CD14-positive monocyte (primary cell): ENCODE measurements at regions of chr17 and their contacts with region 1.

Region 1: DNA sequence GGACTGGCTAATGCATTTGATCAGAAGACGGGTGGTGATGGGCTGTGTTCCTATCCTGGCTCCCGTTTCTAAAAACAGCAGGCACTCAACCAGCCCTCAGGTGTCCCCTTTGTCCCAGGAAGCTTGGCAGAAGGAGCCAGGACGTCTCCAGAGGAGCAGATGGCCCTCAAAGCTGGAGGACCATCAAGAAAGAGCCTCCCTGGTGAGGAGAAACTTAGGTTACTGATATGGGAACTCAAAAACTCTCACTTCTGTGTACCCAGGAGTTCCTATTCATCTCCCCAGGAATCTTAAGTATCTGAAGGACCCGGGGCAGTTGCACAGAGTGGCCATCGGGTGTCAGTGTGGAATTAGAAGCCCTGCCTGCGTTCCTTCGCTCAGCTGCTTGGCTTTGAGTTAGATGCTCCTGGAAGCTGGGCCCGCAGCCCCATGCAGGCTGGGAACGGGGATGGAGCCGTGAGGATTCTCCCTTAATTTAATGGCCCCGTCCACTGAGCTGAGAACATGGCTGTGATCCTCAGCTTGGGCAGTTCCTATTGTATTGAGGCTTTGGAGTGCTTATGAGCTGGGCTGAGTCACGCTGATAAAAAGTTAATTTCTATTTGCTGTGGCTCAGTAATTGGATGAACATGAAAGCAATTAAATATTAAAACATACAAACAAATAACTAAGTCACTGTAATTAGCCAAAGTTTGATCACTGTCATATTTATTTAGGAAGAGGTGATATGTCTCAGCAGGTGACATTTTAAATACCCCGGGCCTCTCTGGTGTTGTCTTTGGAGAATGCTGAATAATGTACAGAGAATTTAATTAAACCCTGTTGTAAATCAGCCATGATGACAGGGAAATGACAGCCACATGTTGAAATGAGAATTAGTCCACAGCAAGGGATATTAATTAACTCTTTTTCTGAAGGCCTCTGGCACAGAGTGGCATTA is 402.1 kb downstream of the SEC14L1 start:
- DNase-seq: peak; percentile 40 to 60 (median 56)
- H3K4me3 ChIP-seq: no peak overlapping the region
- H3K4me3 Mint-ChIP-seq: no peak overlapping the region
- H3K27ac ChIP-seq: no peak overlapping the region
- H3K27ac Mint-ChIP-seq: no peak overlapping the region
- H3K4me1 ChIP-seq: no peaks in the 10 kb centered on the region
- H3K4me1 Mint-ChIP-seq: peaks cover 20% of the 10 kb centered on the region
- H3K27me3 ChIP-seq: no peaks in the 10 kb centered on the region
- H3K27me3 Mint-ChIP-seq: peaks cover 8 to 16% (median 9%) of the 10 kb centered on the region in 3 donors
- CTCF ChIP-seq: peak; percentile 83

Region 2: DNA sequence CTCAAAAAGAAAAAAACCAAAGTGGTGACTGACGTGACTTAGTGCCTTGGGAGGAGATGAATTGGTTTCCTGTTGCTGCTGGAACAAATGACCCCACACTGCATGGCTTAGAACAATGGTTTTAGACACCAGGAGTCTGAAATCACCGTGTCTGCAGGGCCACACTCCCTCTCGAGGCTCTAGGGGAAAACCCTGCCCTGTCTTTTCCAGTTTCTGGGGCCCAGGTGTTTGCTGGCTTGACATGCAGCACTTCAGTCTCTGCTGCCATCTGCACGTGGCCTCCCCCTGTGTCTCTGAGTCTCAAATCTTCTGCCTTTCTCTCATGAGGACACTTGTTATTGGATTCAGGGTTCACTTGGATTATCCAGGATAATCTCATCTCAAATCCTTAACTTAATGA is 91.9 kb after region 1 on chr17:
- intact Hi-C with region 1: loop called in 1 of 2 experiments (anchors 10 kb)
- DNase-seq: no peak
- H3K4me3 ChIP-seq: no peak overlapping the region
- H3K4me3 Mint-ChIP-seq: no peak overlapping the region
- H3K27ac ChIP-seq: no peak overlapping the region
- H3K27ac Mint-ChIP-seq: no peak overlapping the region
- H3K4me1 ChIP-seq: no peaks in the 10 kb centered on the region
- H3K4me1 Mint-ChIP-seq: no peaks in the 10 kb centered on the region
- H3K27me3 ChIP-seq: no peaks in the 10 kb centered on the region
- H3K27me3 Mint-ChIP-seq: peaks cover 0 to 4% (median 3%) of the 10 kb centered on the region in 3 donors
- CTCF ChIP-seq: no peak

Region 3: GRCh38 chr17:77741109-77741508 is 198.3 kb after region 1 on chr17:
- intact Hi-C with region 1: loop called in 1 of 2 experiments (anchors 10 kb)
- DNase-seq: peak in 1 of 3 donors; percentile 1
- H3K4me3 ChIP-seq: no peak overlapping the region
- H3K4me3 Mint-ChIP-seq: no peak overlapping the region
- H3K27ac ChIP-seq: no peak overlapping the region
- H3K27ac Mint-ChIP-seq: no peak overlapping the region
- H3K4me1 ChIP-seq: no peaks in the 10 kb centered on the region
- H3K4me1 Mint-ChIP-seq: no peaks in the 10 kb centered on the region
- H3K27me3 ChIP-seq: no peaks in the 10 kb centered on the region
- H3K27me3 Mint-ChIP-seq: peaks cover 4 to 6% (median 4%) of the 10 kb centered on the region in 3 donors
- CTCF ChIP-seq: peak; percentile 62

Region 4: GRCh38 chr17:78013683-78014467 is 471.1 kb after region 1 on chr17:
- intact Hi-C with region 1: loop called (anchors 5 kb)
- DNase-seq: peak; percentile 32 to 54 (median 50)
- H3K4me3 ChIP-seq: no peak overlapping the region
- H3K4me3 Mint-ChIP-seq: no peak overlapping the region
- H3K27ac ChIP-seq: no peak overlapping the region
- H3K27ac Mint-ChIP-seq: peak overlapping the region in 1 of 7 donors; percentile 2
- H3K4me1 ChIP-seq: no peaks in the 10 kb centered on the region
- H3K4me1 Mint-ChIP-seq: peaks cover 12% of the 10 kb centered on the region
- H3K27me3 ChIP-seq: no peaks in the 10 kb centered on the region
- H3K27me3 Mint-ChIP-seq: no peaks in the 10 kb centered on the region
- CTCF ChIP-seq: peak; percentile 87